ENCODE measurements at regions of chr2 and their contacts with region 1.

Region 1: GRCh38 chr2:209970322-209971110 is 31.9 kb upstream of the RPE start:
- DNase-seq: peak; percentile 45 to 57
- H3K4me3 ChIP-seq: no peak overlapping the region
- H3K4me3 Mint-ChIP-seq: no peak overlapping the region
- H3K27ac Mint-ChIP-seq: peak overlapping the region; percentile 79
- H3K4me1 ChIP-seq: 0 out of 2 replicates have a peak, but pooled peaks cover 8% of the 10 kb centered on the region
- H3K4me1 Mint-ChIP-seq: peaks cover 10% of the 10 kb centered on the region
- H3K27me3 ChIP-seq: no peaks in the 10 kb centered on the region
- H3K27me3 Mint-ChIP-seq: no peaks in the 10 kb centered on the region
- CTCF ChIP-seq: no peak

Region 2: GRCh38 chr2:210002158-210003157 is 31.9 kb after region 1 on chr2 and contains the start of gene RPE:
- CTCF ChIA-PET with region 1: no interaction called
- POLR2A ChIA-PET with region 1: no interaction called
- intact Hi-C with region 1: loop called (anchors 1 kb)
- DNase-seq: peak; percentile 96
- H3K4me3 ChIP-seq: peak within 1 kb of the TSS; percentile 75
- H3K4me3 Mint-ChIP-seq: peak within 1 kb of the TSS; percentile 78
- H3K27ac Mint-ChIP-seq: peak within 1 kb of the TSS; percentile 98
- H3K4me1 ChIP-seq: peaks cover 14% of the 10 kb centered on the region
- H3K4me1 Mint-ChIP-seq: peaks cover 25% of the 10 kb centered on the region
- H3K27me3 ChIP-seq: no peaks in the 10 kb centered on the region
- H3K27me3 Mint-ChIP-seq: no peaks in the 10 kb centered on the region
- CTCF ChIP-seq: no peak
- total RNA-seq, gene RPE: 91.1 and 92.9 TPM in 2 replicates